ENCODE measurements at regions of chr13 and their contacts with region 1.

Region 1: GRCh38 chr13:68628994-68629393 is 1398.9 kb upstream of the PCDH9 start:
- DNase-seq: no peak
- ATAC-seq: no peak
- H3K4me3 ChIP-seq: no peak overlapping the region
- H3K27ac ChIP-seq: no peak overlapping the region
- H3K4me1 ChIP-seq: no peaks in the 10 kb centered on the region
- H3K27me3 ChIP-seq: no peaks in the 10 kb centered on the region
- CTCF ChIP-seq: no peak
- EP300 ChIP-seq: no peak
- POLR2A ChIP-seq: no peak
- RAD21 ChIP-seq: no peak

Region 2: DNA sequence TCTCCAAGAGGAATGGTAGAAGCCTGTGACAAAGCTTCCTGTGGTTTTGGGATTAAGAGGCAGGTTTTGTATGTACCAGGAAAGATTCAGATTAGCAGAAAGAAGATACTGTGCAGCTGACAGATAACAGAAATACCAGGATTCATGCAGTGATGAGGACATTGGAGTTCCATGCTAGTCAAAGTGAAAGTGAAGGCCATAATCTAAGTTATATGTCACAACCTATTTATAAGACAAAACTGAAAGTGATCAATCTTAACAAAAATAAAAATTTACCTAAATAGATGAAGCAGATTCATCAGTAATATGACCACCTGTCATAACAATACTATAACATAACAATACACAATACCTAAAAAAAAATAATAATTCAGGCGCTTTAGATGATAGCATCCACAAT is 93.7 kb before region 1 on chr13:
- CTCF ChIA-PET with region 1: no interaction called
- POLR2A ChIA-PET with region 1: no interaction called
- in situ Hi-C with region 1: no loop called
- intact Hi-C with region 1: no loop called
- DNase-seq: no peak
- ATAC-seq: no peak
- H3K4me3 ChIP-seq: no peak overlapping the region
- H3K27ac ChIP-seq: no peak overlapping the region
- H3K4me1 ChIP-seq: no peaks in the 10 kb centered on the region
- H3K27me3 ChIP-seq: no peaks in the 10 kb centered on the region
- CTCF ChIP-seq: no peak
- EP300 ChIP-seq: no peak
- POLR2A ChIP-seq: no peak
- RAD21 ChIP-seq: no peak

Region 3: GRCh38 chr13:68784275-68784674 is 155.3 kb after region 1 on chr13:
- CTCF ChIA-PET with region 1: no interaction called
- POLR2A ChIA-PET with region 1: no interaction called
- in situ Hi-C with region 1: no loop called
- intact Hi-C with region 1: loop called (anchors 5 kb)
- DNase-seq: no peak
- ATAC-seq: no peak
- H3K4me3 ChIP-seq: no peak overlapping the region
- H3K27ac ChIP-seq: no peak overlapping the region
- H3K4me1 ChIP-seq: no peaks in the 10 kb centered on the region
- H3K27me3 ChIP-seq: no peaks in the 10 kb centered on the region
- CTCF ChIP-seq: no peak
- EP300 ChIP-seq: no peak
- POLR2A ChIP-seq: no peak
- RAD21 ChIP-seq: no peak